Breast epithelium (tissue), 4 donors: ENCODE measurements at regions of chr4 and their contacts with region 1.

Region 1: GRCh38 chr4:156101571-156101970 is 147.9 kb upstream of the CTSO start:
- DNase-seq: no peak
- H3K4me3 ChIP-seq: no peak overlapping the region
- H3K27ac ChIP-seq: no peak overlapping the region
- H3K4me1 ChIP-seq: no peaks in the 10 kb centered on the region
- H3K27me3 ChIP-seq: no peaks in the 10 kb centered on the region
- CTCF ChIP-seq: no peak
- POLR2A ChIP-seq: no peak

Region 2: DNA sequence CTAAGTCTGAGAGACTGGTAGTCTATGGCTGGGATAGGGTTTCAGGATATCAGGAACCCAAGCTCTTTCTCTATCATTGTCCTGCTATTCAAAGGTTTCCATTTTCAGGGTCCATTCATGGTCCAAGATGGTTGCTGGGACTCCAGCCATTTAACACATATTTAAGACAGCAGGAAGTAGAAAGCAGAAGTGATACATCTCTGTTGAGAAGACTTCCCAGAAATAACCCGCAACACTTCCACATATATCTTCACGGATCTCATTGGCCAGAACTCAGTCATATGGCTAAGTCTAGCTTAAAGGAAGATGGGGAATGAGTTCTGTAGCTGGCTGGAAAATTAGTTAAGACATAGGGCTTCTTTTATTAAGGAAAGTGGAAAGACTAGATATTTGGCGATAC is 171.7 kb before region 1 on chr4:
- intact Hi-C with region 1: loop called (anchors 5 kb)
- DNase-seq: no peak
- H3K4me3 ChIP-seq: no peak overlapping the region
- H3K27ac ChIP-seq: no peak overlapping the region
- H3K4me1 ChIP-seq: no peaks in the 10 kb centered on the region
- H3K27me3 ChIP-seq: no peaks in the 10 kb centered on the region
- CTCF ChIP-seq: no peak
- POLR2A ChIP-seq: no peak

Region 3: DNA sequence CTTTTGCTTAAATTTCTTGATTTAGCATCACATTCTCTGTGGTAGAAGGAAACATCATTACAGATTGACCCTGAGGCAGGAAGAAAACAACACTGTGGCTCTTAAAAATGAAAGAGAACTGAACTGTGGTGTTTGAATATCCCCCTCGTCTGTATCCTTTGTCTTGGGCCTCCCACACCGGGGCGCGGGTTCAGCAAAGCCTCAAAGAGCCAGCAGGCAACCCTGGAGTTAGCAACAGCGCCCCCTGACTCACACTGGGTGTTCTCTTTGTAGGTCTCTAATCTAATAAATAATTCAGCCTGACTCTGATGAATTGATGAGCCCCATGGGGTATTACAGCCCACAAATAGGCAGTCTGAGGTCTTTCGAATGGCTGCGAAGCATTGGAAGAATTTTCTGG is 101.8 kb before region 1 on chr4:
- intact Hi-C with region 1: no loop called
- DNase-seq: no peak
- H3K4me3 ChIP-seq: no peak overlapping the region
- H3K27ac ChIP-seq: no peak overlapping the region
- H3K4me1 ChIP-seq: no peaks in the 10 kb centered on the region
- H3K27me3 ChIP-seq: no peaks in the 10 kb centered on the region
- CTCF ChIP-seq: no peak
- POLR2A ChIP-seq: no peak